HCT116 (cell line): ENCODE measurements at regions of chr1 and their contacts with region 1.

Region 1: DNA sequence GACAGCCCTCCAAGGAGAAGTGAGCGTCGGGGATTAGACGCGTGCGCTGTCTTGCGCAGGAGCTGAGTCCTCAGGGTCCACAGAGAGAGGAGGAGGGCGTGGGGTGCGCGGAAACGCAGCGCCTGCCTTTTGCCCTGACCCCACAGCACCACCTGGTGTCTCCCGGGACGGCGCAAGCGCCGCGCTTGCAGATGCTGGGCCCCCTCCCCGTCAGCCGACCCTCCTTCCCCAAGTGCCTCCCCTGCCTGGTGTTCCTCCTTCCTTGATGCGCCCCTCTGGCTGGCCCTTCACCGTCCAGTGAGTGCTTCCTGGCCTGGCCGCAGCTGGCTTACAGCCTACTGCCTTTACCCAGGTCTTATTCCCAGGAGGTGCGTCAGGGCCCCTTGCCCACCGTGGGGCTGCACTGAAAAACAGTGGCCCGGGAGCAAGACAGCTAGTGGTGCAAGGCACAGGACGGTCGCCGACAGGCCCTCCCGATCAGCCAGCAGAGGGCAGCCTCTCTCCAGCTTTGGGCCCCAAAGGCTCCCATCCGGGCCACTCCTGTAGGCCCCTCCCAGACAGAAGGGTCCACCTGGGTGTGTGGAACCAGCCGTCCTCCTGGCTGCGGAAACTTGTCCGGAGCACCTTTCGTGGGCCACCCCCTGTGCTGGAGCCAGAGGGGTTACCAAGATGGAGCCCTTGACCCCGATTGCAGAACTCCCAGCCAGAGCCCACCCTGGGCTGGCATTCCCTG is 12.9 kb upstream of the PHLDA3 start:
- DNase-seq: peak; percentile 76
- ATAC-seq: peak; percentile 83
- H3K4me3 ChIP-seq: no peak overlapping the region
- H3K27ac ChIP-seq: peak overlapping the region; percentile 41; the same call in 1 of the 2 replicates
- H3K4me1 ChIP-seq: peaks cover 23 to 29% of the 10 kb centered on the region in 2 experiments
- H3K27me3 ChIP-seq: no peaks in the 10 kb centered on the region
- CTCF ChIP-seq: peak; percentile 88 to 98 (median 89)
- POLR2A ChIP-seq: no peak
- RAD21 ChIP-seq: peak; percentile 99

Region 2: GRCh38 chr1:201436393-201436792 is 45.5 kb before region 1 on chr1:
- CTCF ChIA-PET with region 1: interaction called, 44 read pairs
- POLR2A ChIA-PET with region 1: interaction called, 8 read pairs
- RAD21 ChIA-PET with region 1: interaction called, 5 to 12 read pairs
- intact Hi-C with region 1: loop called (anchors 1 kb)
- DNase-seq: peak; percentile 56
- ATAC-seq: peak; percentile 97
- H3K4me3 ChIP-seq: no peak overlapping the region
- H3K27ac ChIP-seq: no peak overlapping the region
- H3K4me1 ChIP-seq: peaks cover 13 to 19% of the 10 kb centered on the region in 2 experiments
- H3K27me3 ChIP-seq: no peaks in the 10 kb centered on the region
- CTCF ChIP-seq: peak; percentile 40 to 54 (median 48); a peak in 5 of 6 replicates
- POLR2A ChIP-seq: no peak
- RAD21 ChIP-seq: peak; percentile 54

Region 3: DNA sequence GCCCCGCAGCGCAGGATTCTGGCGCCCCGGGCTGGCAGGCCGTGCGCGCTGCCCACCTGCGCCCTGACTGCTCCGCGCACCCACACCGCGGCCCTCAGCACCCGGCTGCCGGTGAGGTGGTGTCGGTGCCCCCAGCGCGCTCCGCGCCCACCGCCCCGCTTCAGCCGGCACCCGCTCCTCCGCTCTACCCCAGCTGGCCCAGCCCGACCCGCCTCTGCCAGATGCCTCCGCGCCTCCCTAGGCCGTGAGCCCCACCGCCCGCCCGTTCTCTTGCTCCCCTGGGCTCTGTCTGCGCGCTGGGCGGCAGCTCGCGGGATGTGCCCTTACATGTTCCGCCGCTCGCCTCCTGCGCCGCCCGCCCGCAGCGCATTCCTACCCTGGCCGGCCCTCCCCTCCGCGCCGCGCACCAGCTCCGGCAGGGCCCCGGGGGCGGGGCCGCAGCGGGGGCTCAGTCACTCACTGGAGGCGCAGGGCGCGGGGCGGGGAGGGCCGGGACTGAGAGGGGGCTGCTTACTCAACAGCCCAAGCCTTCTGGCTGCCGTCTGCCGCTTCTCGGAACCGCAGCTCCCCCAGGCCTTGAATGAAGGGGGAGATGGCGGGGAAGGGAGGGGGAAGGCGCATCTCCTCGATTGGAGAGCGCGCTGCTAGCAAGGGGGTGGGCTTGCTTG is 12.9 kb before region 1 on chr1 and contains the start of gene PHLDA3:
- CTCF ChIA-PET with region 1: interaction called, 7 read pairs
- POLR2A ChIA-PET with region 1: interaction called, 10 read pairs
- RAD21 ChIA-PET with region 1: interaction called in 1 of 2 experiments, 3 read pairs
- intact Hi-C with region 1: no loop called
- DNase-seq: no peak
- ATAC-seq: peak; percentile 86
- H3K4me3 ChIP-seq: peak within 1 kb of the TSS; percentile 62 to 83
- H3K27ac ChIP-seq: peak within 1 kb of the TSS; percentile 97
- H3K4me1 ChIP-seq: peaks cover 23 to 49% of the 10 kb centered on the region in 2 experiments
- H3K27me3 ChIP-seq: no peaks in the 10 kb centered on the region
- CTCF ChIP-seq: no peak
- POLR2A ChIP-seq: no peak
- RAD21 ChIP-seq: no peak
- total RNA-seq, gene PHLDA3: 22.1 TPM

Region 4: DNA sequence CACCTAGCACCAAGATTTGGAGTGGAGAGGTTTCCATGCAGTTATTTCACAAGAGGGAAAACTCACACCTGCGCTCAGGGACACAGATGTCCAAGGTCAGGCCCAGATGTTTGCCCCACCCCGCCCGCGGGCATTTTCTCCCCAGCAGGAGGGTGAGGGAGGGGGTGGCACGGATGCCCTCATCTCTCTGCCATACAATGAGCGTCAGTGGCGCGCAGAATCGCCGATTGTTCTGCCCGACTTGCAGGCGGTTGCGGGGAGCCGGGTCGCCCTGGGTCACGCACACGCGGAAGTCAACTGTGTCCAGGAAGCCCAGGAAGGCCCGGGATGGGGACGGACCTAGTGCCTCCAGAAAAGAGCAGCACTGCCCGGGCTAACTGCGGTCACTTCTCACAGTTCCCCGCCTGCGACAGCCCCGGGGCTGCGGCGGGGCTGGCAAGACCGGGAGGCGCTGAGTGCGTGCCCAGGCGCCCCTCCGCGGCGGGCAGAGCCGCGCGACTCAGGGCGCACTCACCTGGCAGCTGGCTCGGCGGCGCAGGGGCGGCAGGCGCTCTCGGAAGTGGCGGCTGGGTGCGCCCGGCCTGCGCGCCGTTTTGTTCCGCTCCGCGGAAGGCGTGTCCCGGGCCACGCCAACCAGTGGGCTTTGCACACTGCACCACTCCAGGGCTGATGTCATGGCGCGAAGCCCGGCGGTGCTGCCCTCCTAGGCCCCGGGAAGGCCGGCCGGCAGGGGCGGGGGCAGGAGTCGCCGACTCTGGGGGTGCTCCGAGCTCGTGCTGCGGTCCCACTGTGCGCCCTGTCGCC is 24.8 kb after region 1 on chr1 and contains the start of gene CSRP1:
- CTCF ChIA-PET with region 1: interaction called, 194 read pairs
- POLR2A ChIA-PET with region 1: interaction called, 17 read pairs
- RAD21 ChIA-PET with region 1: interaction called in 1 of 2 experiments, 23 read pairs
- intact Hi-C with region 1: no loop called
- DNase-seq: peak; percentile 71
- ATAC-seq: peak; percentile 95
- H3K4me3 ChIP-seq: peak within 1 kb of the TSS; percentile 64 to 73
- H3K27ac ChIP-seq: peak within 1 kb of the TSS; percentile 64
- H3K4me1 ChIP-seq: peaks cover 11 to 27% of the 10 kb centered on the region in 2 experiments
- H3K27me3 ChIP-seq: no peaks in the 10 kb centered on the region
- CTCF ChIP-seq: no peak
- POLR2A ChIP-seq: peak; percentile 96
- RAD21 ChIP-seq: peak; percentile 18
- total RNA-seq, gene CSRP1: 51.7 TPM

Region 5: DNA sequence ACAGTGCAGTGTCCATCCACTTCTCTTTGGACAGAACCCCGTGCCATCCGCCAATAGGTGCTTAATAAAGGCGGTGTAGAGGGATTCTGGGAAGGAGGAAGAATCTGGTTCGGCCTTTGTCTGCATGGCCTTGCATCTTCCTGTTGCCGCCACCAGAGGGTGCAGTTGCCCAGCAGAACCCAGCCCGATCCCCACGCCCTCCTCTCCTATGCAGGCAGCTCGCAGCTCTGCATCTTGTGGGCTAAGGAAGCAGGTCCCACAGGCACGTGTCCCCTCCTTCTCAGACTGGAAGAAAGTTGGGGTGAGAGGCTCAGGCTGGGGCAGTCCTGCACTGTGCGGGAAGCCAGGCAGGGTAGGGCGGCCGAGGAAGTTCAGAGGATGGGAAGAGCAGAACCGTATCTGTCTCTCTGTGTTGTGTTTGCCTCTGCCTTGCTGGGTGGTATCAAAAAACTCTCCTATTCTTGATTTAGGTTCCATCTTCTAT is 77.8 kb after region 1 on chr1:
- CTCF ChIA-PET with region 1: interaction called, 5 read pairs
- POLR2A ChIA-PET with region 1: no interaction called
- RAD21 ChIA-PET with region 1: interaction called in 1 of 2 experiments, 5 read pairs
- intact Hi-C with region 1: loop called (anchors 1 kb)
- DNase-seq: peak; percentile 79
- ATAC-seq: peak; percentile 99
- H3K4me3 ChIP-seq: no peak overlapping the region
- H3K27ac ChIP-seq: no peak overlapping the region
- H3K4me1 ChIP-seq: peaks cover 2 to 17% of the 10 kb centered on the region in 2 experiments; a peak in 3 of 4 replicates
- H3K27me3 ChIP-seq: no peaks in the 10 kb centered on the region
- CTCF ChIP-seq: peak; percentile 94 to 98 (median 96)
- POLR2A ChIP-seq: no peak
- RAD21 ChIP-seq: peak; percentile 100